ENCODE measurements at regions of chr7 and their contacts with region 1.

Region 1: GRCh38 chr7:142012825-142013511 is 17.3 kb downstream of the MGAM start:
- DNase-seq: peak; percentile 47
- H3K4me3 ChIP-seq: no peak overlapping the region
- H3K27ac ChIP-seq: no peak overlapping the region
- H3K4me1 ChIP-seq: peaks cover 15% of the 10 kb centered on the region
- H3K27me3 ChIP-seq: no peaks in the 10 kb centered on the region
- CTCF ChIP-seq: peak; percentile 20 to 44

Region 2: GRCh38 chr7:141844256-141844655 is 168.7 kb before region 1 on chr7:
- CTCF ChIA-PET with region 1: no interaction called
- dilution Hi-C with region 1: no loop called
- in situ Hi-C with region 1: no loop called
- intact Hi-C with region 1: no loop called
- DNase-seq: no peak
- H3K4me3 ChIP-seq: no peak overlapping the region
- H3K27ac ChIP-seq: no peak overlapping the region
- H3K4me1 ChIP-seq: no peaks in the 10 kb centered on the region
- H3K27me3 ChIP-seq: no peaks in the 10 kb centered on the region
- CTCF ChIP-seq: no peak

Region 3: GRCh38 chr7:141860207-141860606 is 152.8 kb before region 1 on chr7:
- CTCF ChIA-PET with region 1: interaction called, 11 read pairs
- dilution Hi-C with region 1: no loop called
- in situ Hi-C with region 1: no loop called
- intact Hi-C with region 1: no loop called
- DNase-seq: no peak
- H3K4me3 ChIP-seq: no peak overlapping the region
- H3K27ac ChIP-seq: no peak overlapping the region
- H3K4me1 ChIP-seq: no peaks in the 10 kb centered on the region
- H3K27me3 ChIP-seq: no peaks in the 10 kb centered on the region
- CTCF ChIP-seq: no peak

Region 4: DNA sequence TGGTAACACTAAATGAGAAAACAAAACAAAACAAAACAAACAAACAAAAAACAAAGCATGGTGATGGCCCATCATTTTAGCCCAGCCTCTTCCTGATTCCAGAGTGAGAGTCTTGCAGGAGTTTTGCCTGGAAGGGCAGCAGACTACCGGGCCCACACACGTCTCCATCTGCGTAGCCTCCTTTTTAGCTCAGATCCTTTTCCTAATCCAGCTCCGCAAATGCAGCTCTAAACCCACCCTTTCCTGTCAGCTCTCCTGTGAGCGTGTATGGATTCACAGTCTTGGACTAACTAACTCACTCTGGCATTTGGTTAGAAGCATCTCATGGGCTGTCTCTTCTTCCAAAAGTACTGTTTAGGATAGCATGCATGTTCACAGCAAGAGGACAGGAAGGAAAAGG is 82.8 kb before region 1 on chr7:
- CTCF ChIA-PET with region 1: no interaction called
- dilution Hi-C with region 1: loop called (anchors 5 kb)
- in situ Hi-C with region 1: no loop called
- intact Hi-C with region 1: no loop called
- DNase-seq: no peak
- H3K4me3 ChIP-seq: no peak overlapping the region
- H3K27ac ChIP-seq: no peak overlapping the region
- H3K4me1 ChIP-seq: no peaks in the 10 kb centered on the region
- H3K27me3 ChIP-seq: no peaks in the 10 kb centered on the region
- CTCF ChIP-seq: no peak

Region 5: DNA sequence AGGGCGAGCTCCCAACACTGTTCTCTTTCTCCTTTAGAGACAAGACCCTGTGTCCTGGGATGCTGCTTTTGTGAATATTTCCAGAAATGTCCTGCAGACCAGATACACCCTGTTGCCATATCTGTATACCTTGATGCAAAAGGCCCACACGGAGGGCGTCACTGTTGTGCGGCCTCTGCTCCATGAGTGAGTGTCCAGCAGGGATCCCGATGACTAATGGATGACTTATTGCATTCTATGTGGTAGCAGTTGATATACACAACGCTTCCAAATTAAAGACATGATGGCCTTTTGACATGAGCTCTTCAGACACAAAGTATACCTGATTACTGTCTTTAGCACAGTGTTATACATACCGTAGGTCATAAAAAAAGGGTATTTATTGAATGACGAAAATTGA is 53.6 kb after region 1 on chr7:
- CTCF ChIA-PET with region 1: no interaction called
- dilution Hi-C with region 1: no loop called
- in situ Hi-C with region 1: no loop called
- intact Hi-C with region 1: no loop called
- DNase-seq: no peak
- H3K4me3 ChIP-seq: no peak overlapping the region
- H3K27ac ChIP-seq: no peak overlapping the region
- H3K4me1 ChIP-seq: no peaks in the 10 kb centered on the region
- H3K27me3 ChIP-seq: no peaks in the 10 kb centered on the region
- CTCF ChIP-seq: no peak

Region 6: DNA sequence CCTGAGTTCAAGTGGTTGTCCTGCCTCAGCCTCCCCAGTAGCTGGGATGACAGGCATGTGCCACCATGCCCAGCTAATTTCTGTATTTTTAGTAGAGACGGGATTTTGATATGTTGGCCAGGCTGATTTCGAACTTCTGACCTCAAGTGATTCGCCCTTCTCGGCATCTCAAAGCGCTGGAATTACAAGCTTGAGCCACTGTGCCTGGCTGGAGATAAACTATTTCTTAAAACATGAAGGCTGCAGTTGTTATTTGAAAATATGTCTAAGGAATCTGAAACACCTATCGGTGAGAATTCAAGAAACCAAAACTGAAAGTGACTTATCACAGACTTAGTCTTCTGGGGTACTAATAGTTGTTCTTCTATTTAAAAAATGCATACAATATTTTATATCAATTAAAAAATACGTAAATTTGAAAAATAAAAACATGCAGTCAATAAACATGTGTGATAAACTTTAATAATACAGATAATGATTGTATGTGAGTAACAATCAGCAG is 421.7 kb after region 1 on chr7:
- CTCF ChIA-PET with region 1: no interaction called
- dilution Hi-C with region 1: no loop called
- in situ Hi-C with region 1: no loop called
- intact Hi-C with region 1: no loop called
- DNase-seq: no peak
- H3K4me3 ChIP-seq: no peak overlapping the region
- H3K27ac ChIP-seq: no peak overlapping the region
- H3K4me1 ChIP-seq: peaks cover 6% of the 10 kb centered on the region
- H3K27me3 ChIP-seq: no peaks in the 10 kb centered on the region
- CTCF ChIP-seq: no peak